ENCODE measurements at regions of chr3 and their contacts with region 1.

Region 1: GRCh38 chr3:100525753-100526612 is 33.6 kb downstream of the TMEM45A start:
- DNase-seq: no peak
- ATAC-seq: no peak
- H3K4me3 ChIP-seq: no peak overlapping the region
- H3K4me3 Mint-ChIP-seq: no peak overlapping the region
- H3K27ac ChIP-seq: no peak overlapping the region
- H3K27ac Mint-ChIP-seq: no peak overlapping the region
- H3K4me1 ChIP-seq: no peaks in the 10 kb centered on the region
- H3K4me1 Mint-ChIP-seq: no peaks in the 10 kb centered on the region
- H3K27me3 ChIP-seq: no peaks in the 10 kb centered on the region
- H3K27me3 Mint-ChIP-seq: peaks cover 6 to 20% (median 11%) of the 10 kb centered on the region in 5 donors

Region 2: DNA sequence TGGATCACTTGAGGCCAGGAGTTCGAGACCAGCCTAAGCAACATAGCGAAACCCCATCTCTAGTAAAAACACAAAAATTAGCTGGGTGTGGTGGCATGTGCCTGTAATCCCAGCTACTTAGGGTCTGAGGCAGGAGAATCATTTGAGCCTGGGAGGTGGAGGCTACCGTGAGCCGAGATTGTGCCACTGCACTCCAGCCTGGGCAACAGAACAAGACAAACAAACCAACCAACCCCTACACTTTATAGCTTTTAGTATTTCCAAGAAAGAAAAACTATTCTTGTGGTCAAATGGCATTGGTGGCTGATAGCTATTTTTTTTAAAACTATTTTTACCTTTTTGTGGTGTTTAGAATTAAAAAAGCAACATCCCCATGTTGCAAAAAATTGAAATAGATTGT is 26.3 kb before region 1 on chr3:
- CTCF ChIA-PET with region 1: interaction called, 10 read pairs
- POLR2A ChIA-PET with region 1: no interaction called
- intact Hi-C with region 1: no loop called
- DNase-seq: no peak
- ATAC-seq: no peak
- H3K4me3 ChIP-seq: no peak overlapping the region
- H3K4me3 Mint-ChIP-seq: no peak overlapping the region
- H3K27ac ChIP-seq: no peak overlapping the region
- H3K27ac Mint-ChIP-seq: no peak overlapping the region
- H3K4me1 ChIP-seq: no peaks in the 10 kb centered on the region
- H3K4me1 Mint-ChIP-seq: peaks cover 0 to 5% (median 0%) of the 10 kb centered on the region in 7 donors
- H3K27me3 ChIP-seq: no peaks in the 10 kb centered on the region
- H3K27me3 Mint-ChIP-seq: peaks cover 21 to 46% (median 28%) of the 10 kb centered on the region in 5 donors

Measured in naive thymus-derived CD4-positive, alpha-beta T cell (primary cell).